A673 (cell line): ENCODE measurements at regions of chr9 and their contacts with region 1.

Region 1: GRCh38 chr9:129990269-129991010 is 52.5 kb downstream of the FNBP1 start:
- DNase-seq: no peak
- H3K4me3 ChIP-seq: no peak overlapping the region
- H3K27ac ChIP-seq: peak overlapping the region; percentile 15
- H3K4me1 ChIP-seq: peaks cover 21% of the 10 kb centered on the region
- H3K27me3 ChIP-seq: no peaks in the 10 kb centered on the region
- CTCF ChIP-seq: no peak

Region 2: DNA sequence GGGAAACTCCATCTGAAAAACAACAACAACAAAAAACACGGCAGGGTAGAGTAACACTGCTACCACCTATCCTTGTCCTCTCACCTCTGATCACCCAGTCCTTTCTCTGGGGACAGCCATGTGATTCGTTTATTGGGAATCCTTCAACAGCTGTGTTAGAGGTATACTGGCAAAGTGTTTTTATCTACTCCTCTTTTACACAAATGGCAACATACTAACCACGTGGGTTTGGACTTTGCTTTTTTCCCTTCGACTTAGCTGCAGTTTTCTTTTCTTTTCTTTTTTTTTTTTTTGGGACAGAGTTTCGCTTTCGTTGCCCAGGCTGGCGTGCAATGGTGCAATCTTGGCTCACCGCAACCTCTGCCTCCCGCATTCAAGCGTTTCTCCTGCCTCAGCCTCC is 1312.6 kb before region 1 on chr9:
- CTCF ChIA-PET with region 1: no interaction called
- POLR2A ChIA-PET with region 1: interaction called, 13 read pairs
- intact Hi-C with region 1: no loop called
- DNase-seq: no peak
- H3K4me3 ChIP-seq: no peak overlapping the region
- H3K27ac ChIP-seq: no peak overlapping the region
- H3K4me1 ChIP-seq: no peaks in the 10 kb centered on the region
- H3K27me3 ChIP-seq: no peaks in the 10 kb centered on the region
- CTCF ChIP-seq: no peak

Region 3: GRCh38 chr9:130020618-130021017 is 30.2 kb after region 1 on chr9:
- CTCF ChIA-PET with region 1: no interaction called
- POLR2A ChIA-PET with region 1: no interaction called
- intact Hi-C with region 1: no loop called
- DNase-seq: no peak
- H3K4me3 ChIP-seq: no peak overlapping the region
- H3K27ac ChIP-seq: no peak overlapping the region
- H3K4me1 ChIP-seq: peaks cover 8% of the 10 kb centered on the region
- H3K27me3 ChIP-seq: no peaks in the 10 kb centered on the region
- CTCF ChIP-seq: no peak

Region 4: GRCh38 chr9:130088051-130088450 is 97.6 kb after region 1 on chr9:
- CTCF ChIA-PET with region 1: no interaction called
- POLR2A ChIA-PET with region 1: interaction called, 12 read pairs
- intact Hi-C with region 1: no loop called
- DNase-seq: no peak
- H3K4me3 ChIP-seq: no peak overlapping the region
- H3K27ac ChIP-seq: no peak overlapping the region
- H3K4me1 ChIP-seq: peaks cover 16% of the 10 kb centered on the region
- H3K27me3 ChIP-seq: no peaks in the 10 kb centered on the region
- CTCF ChIP-seq: no peak